ENCODE measurements at regions of chrX and their contacts with region 1.

Region 1: GRCh38 chrX:109714340-109714958 is 18.6 kb downstream of the ACSL4 start:
- DNase-seq: peak; percentile 65
- H3K4me3 ChIP-seq: peak overlapping the region; percentile 32
- H3K27ac ChIP-seq: peak overlapping the region; percentile 49
- H3K4me1 ChIP-seq: peaks cover 39% of the 10 kb centered on the region
- H3K27me3 ChIP-seq: no peaks in the 10 kb centered on the region

Region 2: GRCh38 chrX:109856974-109857373 is 142.5 kb after region 1 on chrX:
- in situ Hi-C with region 1: loop called (anchors 10 kb)
- DNase-seq: peak; percentile 51
- H3K4me3 ChIP-seq: no peak overlapping the region
- H3K27ac ChIP-seq: no peak overlapping the region
- H3K4me1 ChIP-seq: peaks cover 25% of the 10 kb centered on the region
- H3K27me3 ChIP-seq: no peaks in the 10 kb centered on the region